HAP-1 (cell line): ENCODE measurements at regions of chr2 and their contacts with region 1.

Region 1: DNA sequence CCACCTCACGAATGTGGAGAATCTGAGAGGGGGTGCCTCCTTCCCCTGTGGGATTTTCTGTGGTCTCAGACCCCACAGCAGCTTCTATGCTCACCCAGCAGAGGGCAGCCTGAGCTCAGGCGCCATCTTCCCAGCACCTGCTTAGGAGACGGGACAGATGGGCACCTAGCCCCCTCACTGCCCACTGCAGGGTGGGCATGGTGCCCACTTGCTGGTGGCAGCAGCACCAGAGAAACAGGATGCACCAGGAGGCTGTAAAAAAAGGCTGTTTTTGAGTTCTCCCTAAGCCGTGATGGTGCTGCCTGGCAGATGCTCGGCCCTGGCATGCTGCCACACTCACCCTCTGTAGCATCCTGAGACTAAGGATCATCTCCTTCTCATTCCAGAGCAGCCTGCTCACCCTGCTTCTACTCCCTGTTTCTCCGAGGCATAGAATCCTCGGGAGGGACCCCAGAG is 19.1 kb upstream of the SLC20A1 start:
- DNase-seq: peak; percentile 34 to 68
- H3K4me3 ChIP-seq: no peak overlapping the region
- H3K4me1 ChIP-seq: no peaks in the 10 kb centered on the region
- H3K27me3 ChIP-seq: no peaks in the 10 kb centered on the region

Region 2: DNA sequence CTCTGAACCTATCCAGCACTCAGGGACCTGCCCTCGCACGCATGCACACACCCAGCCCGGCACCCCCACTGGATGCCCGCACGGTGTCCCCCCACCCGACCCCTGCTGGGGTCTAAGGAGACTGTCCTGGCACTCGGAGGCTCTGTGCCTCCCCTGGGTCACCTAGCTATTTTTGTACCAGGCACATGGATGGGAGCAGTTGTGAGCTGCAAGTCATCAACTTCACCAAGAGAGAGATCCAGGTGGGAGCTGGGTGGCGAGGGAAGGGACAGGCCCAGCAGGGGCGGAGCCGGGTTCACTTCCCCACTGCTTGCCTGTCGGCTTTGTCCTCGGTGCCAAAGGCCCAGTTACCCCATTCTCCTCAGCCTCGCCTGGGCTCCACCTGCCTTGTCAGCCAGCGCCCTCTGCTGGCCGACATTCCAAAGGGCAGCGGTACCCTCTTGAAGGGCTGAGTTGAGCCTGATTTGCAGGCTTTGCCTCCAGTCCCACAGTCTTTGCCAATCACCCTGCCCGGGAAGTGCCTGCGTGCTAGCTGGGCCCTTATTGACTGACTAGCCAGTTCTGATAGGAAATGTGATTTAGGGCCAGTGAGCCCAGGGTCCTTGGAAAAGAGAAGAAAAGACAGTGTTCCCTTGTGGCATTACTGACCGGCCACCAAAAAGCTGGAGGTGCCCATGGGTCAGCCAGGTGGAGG is 100.0 kb after region 1 on chr2:
- in situ Hi-C with region 1: loop called (anchors 10 kb)
- DNase-seq: peak; percentile 72 to 92
- H3K4me3 ChIP-seq: no peak overlapping the region
- H3K4me1 ChIP-seq: no peaks in the 10 kb centered on the region; the same call in 1 of the 2 replicates
- H3K27me3 ChIP-seq: no peaks in the 10 kb centered on the region

Region 3: DNA sequence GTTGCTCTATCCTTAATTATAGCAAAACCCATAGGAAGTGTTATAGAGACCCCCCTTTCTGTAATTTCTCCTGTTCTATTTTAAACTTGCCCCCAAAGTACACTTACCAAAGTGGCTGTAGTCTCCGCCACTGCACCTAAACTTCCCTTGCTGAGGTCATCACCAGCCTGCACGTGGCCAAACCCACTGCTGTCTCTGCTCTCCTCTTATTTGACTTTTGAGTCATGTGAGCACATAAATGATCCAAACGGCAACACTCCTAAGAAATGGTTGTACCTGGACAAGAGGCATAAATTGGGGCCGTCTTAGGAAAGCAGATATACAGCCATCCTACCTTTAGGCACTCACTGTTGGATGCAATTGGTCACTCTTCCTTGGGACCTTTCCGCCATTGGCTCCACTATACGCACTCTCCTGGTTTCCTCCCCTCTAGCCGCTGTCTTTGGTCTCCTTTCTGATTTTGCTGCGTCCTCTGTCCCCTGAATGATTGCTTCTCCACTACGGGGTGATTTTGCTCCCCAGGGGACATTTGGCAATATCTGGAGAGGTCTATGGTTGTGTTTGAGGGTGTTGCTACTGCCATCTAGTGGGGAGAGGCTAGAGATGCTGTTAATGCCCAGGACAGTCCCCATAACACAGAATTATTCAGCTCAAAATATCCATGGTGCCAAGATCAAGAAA is 331.9 kb after region 1 on chr2:
- in situ Hi-C with region 1: loop called (anchors 25 kb)
- DNase-seq: peak; percentile 54 to 61
- H3K4me3 ChIP-seq: no peak overlapping the region
- H3K4me1 ChIP-seq: no peaks in the 10 kb centered on the region
- H3K27me3 ChIP-seq: peaks cover 8% of the 10 kb centered on the region; the same call in 1 of the 2 replicates

Region 4: GRCh38 chr2:113930448-113930847 is 1303.8 kb after region 1 on chr2:
- in situ Hi-C with region 1: no loop called
- DNase-seq: no peak
- H3K4me3 ChIP-seq: no peak overlapping the region
- H3K4me1 ChIP-seq: no peaks in the 10 kb centered on the region
- H3K27me3 ChIP-seq: no peaks in the 10 kb centered on the region

Region 5: GRCh38 chr2:114265261-114265660 is 1638.6 kb after region 1 on chr2:
- in situ Hi-C with region 1: no loop called
- DNase-seq: no peak
- H3K4me3 ChIP-seq: no peak overlapping the region
- H3K4me1 ChIP-seq: no peaks in the 10 kb centered on the region
- H3K27me3 ChIP-seq: no peaks in the 10 kb centered on the region